T-cell (primary cell): ENCODE measurements at regions of chr19 and their contacts with region 1.

Region 1: DNA sequence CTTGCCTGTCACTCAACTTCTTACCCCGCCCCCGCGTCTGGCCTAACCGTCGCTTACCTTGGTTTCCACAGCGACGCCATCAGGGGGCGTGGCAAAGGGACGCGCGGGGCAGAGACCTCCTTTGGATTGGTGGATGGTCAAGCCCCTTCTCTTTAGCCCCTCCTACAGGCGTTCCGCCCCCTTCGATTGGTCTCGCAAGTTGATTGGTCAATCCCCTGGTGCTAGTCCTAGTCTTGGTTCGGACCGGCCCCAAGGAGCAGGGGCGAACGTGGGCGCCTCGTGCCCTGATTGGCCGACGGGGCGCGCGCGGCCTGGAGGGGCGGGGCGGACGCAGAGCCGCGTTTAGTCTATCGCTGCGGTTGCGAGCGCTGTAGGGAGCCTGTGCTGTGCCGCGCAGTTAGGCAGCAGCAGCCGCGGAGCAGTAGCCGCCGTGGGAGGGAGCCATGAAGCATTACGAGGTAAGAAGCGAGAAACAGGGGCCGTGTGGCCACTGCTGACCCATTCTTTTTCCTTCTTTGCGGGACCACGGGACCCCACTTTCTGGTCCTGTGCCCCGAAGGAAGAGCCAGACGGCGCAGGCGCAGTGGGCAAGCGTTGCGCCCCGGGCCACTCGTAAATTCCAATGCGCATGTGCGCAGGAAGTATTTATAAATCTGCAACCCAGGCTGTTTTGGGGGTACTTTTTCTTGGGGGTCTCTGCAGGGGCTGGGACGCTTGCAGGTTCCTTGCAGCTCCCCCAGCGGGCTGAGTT is at the start of gene TECR:
- DNase-seq: peak; percentile 99 to 100 (median 100)
- ATAC-seq: peak; percentile 90 to 97 (median 95)
- H3K4me3 ChIP-seq: peak within 1 kb of the TSS; percentile 83 to 89
- H3K4me3 Mint-ChIP-seq: peak within 1 kb of the TSS; percentile 84 to 93 (median 92)
- H3K27ac ChIP-seq: peak within 1 kb of the TSS; percentile 92
- H3K27ac Mint-ChIP-seq: peak within 1 kb of the TSS; percentile 97 to 98
- H3K4me1 ChIP-seq: peaks cover 11 to 49% of the 10 kb centered on the region in 2 experiments
- H3K4me1 Mint-ChIP-seq: peaks cover 33 to 67% (median 57%) of the 10 kb centered on the region in 3 donors
- H3K27me3 ChIP-seq: no peaks in the 10 kb centered on the region
- H3K27me3 Mint-ChIP-seq: no peaks in the 10 kb centered on the region
- total RNA-seq, gene TECR: 137 to 207 (median 171) TPM

Region 2: DNA sequence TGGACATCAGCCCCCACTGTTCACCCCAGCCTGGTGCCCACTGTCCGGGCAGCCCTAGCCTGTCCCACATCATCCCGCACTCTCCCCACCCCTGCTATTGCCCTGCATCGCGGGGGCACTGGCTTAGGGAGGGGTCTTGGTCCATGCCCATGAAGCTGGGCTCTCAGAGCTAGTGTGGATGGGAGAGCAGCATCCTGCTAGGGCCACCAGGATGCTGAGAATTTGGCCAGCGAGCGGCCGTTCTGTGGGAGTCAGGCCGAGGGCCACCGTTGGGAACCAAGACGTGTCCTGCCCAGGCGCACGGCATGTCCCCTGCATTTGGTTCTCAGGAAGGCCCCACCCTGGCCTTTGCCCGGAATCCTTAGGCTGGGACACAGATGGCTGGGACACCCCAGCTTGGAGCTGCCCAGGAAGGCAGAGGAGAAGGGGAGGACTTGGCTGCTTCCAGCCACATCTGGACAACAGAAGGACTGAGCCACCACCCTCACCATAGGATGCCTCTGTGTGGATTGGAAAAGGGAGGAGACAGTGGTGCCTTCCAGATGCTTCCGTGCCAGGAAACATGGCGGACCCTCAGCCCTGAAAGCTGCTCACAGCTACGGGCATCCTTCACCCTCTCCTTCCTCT is 133.6 kb before region 1 on chr19:
- CTCF ChIA-PET with region 1: no interaction called
- POLR2A ChIA-PET with region 1: no interaction called
- DNase-seq: no peak
- ATAC-seq: peak in 1 of 4 experiments; percentile 8
- H3K4me3 ChIP-seq: no peak overlapping the region
- H3K4me3 Mint-ChIP-seq: peak overlapping the region in 1 of 3 donors; percentile 19
- H3K27ac ChIP-seq: no peak overlapping the region
- H3K27ac Mint-ChIP-seq: peak overlapping the region in 1 of 2 donors; percentile 55
- H3K4me1 ChIP-seq: peaks cover 0 to 14% of the 10 kb centered on the region in 2 experiments
- H3K4me1 Mint-ChIP-seq: peaks cover 3 to 29% (median 9%) of the 10 kb centered on the region in 3 donors
- H3K27me3 ChIP-seq: no peaks in the 10 kb centered on the region
- H3K27me3 Mint-ChIP-seq: no peaks in the 10 kb centered on the region

Region 3: GRCh38 chr19:14542711-14543328 is 13.4 kb after region 1 on chr19:
- CTCF ChIA-PET with region 1: no interaction called
- POLR2A ChIA-PET with region 1: interaction called, 4 to 13 read pairs
- DNase-seq: no peak
- ATAC-seq: no peak
- H3K4me3 ChIP-seq: no peak overlapping the region
- H3K4me3 Mint-ChIP-seq: no peak overlapping the region
- H3K27ac ChIP-seq: no peak overlapping the region
- H3K27ac Mint-ChIP-seq: no peak overlapping the region
- H3K4me1 ChIP-seq: peaks cover 2 to 13% of the 10 kb centered on the region in 2 experiments
- H3K4me1 Mint-ChIP-seq: peaks cover 21 to 38% (median 33%) of the 10 kb centered on the region in 3 donors
- H3K27me3 ChIP-seq: no peaks in the 10 kb centered on the region
- H3K27me3 Mint-ChIP-seq: no peaks in the 10 kb centered on the region

Region 4: GRCh38 chr19:14550201-14550784 is 20.9 kb after region 1 on chr19:
- CTCF ChIA-PET with region 1: interaction called in 1 of 2 experiments, 10 read pairs
- POLR2A ChIA-PET with region 1: interaction called in 1 of 2 experiments, 4 read pairs
- DNase-seq: no peak
- ATAC-seq: no peak
- H3K4me3 ChIP-seq: no peak overlapping the region
- H3K4me3 Mint-ChIP-seq: no peak overlapping the region
- H3K27ac ChIP-seq: no peak overlapping the region
- H3K27ac Mint-ChIP-seq: peak overlapping the region; percentile 73 to 92
- H3K4me1 ChIP-seq: peaks cover 10 to 51% of the 10 kb centered on the region in 2 experiments
- H3K4me1 Mint-ChIP-seq: peaks cover 48 to 52% (median 49%) of the 10 kb centered on the region in 3 donors
- H3K27me3 ChIP-seq: no peaks in the 10 kb centered on the region
- H3K27me3 Mint-ChIP-seq: no peaks in the 10 kb centered on the region

Region 5: DNA sequence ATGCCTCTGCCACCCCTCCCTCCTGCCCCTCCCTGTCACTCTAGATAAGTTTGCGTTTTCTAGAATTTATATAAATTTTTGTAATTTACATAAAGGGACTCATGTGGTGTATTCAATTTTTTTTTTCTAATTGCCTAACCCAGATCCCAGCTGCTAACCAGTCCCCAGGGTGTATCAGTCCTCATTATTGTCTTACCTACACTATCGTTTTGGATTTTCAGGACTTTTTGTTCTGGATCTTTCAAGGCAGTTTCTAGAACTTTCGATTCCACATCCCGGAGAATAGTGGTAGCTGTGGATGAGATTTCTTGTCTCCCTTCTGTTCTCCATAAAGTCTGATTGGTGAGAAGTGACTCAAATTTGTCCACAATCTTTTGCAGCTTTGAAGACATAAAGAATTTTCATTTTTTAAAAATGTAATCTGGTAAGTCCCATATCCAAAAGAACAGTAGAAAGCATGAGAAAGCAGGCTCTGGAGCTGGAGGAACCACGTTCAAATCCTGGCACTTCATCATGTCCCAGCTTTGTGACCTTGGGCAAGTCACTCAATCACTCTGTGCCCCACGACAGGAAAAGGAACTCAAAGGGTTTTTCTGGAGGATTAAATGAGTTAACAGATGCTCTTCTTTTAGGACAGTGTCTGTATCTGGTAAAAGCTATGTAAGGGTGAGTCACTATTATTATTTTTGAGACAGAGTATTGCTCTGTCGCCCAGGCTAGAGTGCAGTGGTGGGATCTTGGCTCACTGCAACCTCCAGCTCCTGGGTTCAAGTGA is 125.5 kb after region 1 on chr19:
- CTCF ChIA-PET with region 1: no interaction called
- POLR2A ChIA-PET with region 1: no interaction called
- DNase-seq: no peak
- ATAC-seq: no peak
- H3K4me3 ChIP-seq: no peak overlapping the region
- H3K4me3 Mint-ChIP-seq: no peak overlapping the region
- H3K27ac ChIP-seq: no peak overlapping the region
- H3K27ac Mint-ChIP-seq: no peak overlapping the region
- H3K4me1 ChIP-seq: no peaks in the 10 kb centered on the region
- H3K4me1 Mint-ChIP-seq: no peaks in the 10 kb centered on the region
- H3K27me3 ChIP-seq: peaks cover 0 to 15% of the 10 kb centered on the region in 2 experiments
- H3K27me3 Mint-ChIP-seq: peaks cover 21 to 30% of the 10 kb centered on the region in 2 donors